BJ (cell line): ENCODE measurements at regions of chr6 and their contacts with region 1.

Region 1: GRCh38 chr6:90204327-90205056 is 92.2 kb downstream of the BACH2 start:
- DNase-seq: no peak
- H3K4me3 ChIP-seq: no peak overlapping the region
- H3K27me3 ChIP-seq: peaks cover 7% of the 10 kb centered on the region
- CTCF ChIP-seq: no peak

Region 2: GRCh38 chr6:90121982-90122381 is 82.5 kb before region 1 on chr6:
- CTCF ChIA-PET with region 1: no interaction called
- POLR2A ChIA-PET with region 1: no interaction called
- DNase-seq: no peak
- H3K4me3 ChIP-seq: no peak overlapping the region
- H3K27me3 ChIP-seq: peaks cover 3% of the 10 kb centered on the region
- CTCF ChIP-seq: no peak

Region 3: GRCh38 chr6:90216072-90216977 is 11.8 kb after region 1 on chr6:
- CTCF ChIA-PET with region 1: interaction called, 10 read pairs
- POLR2A ChIA-PET with region 1: no interaction called
- DNase-seq: no peak
- H3K4me3 ChIP-seq: no peak overlapping the region
- H3K27me3 ChIP-seq: 0 out of 2 replicates have a peak, but pooled peaks cover 3% of the 10 kb centered on the region
- CTCF ChIP-seq: no peak